AG04450 (cell line): ENCODE measurements at regions of chr7 and their contacts with region 1.

Region 1: GRCh38 chr7:66033471-66034385 is 41.9 kb upstream of the ASL start:
- DNase-seq: no peak
- H3K4me3 ChIP-seq: no peak overlapping the region
- H3K27ac ChIP-seq: no peak overlapping the region
- H3K27me3 ChIP-seq: no peaks in the 10 kb centered on the region
- CTCF ChIP-seq: no peak

Region 2: GRCh38 chr7:65892835-65893234 is 140.9 kb before region 1 on chr7:
- CTCF ChIA-PET with region 1: no interaction called
- POLR2A ChIA-PET with region 1: no interaction called
- DNase-seq: no peak
- H3K4me3 ChIP-seq: no peak overlapping the region
- H3K27ac ChIP-seq: no peak overlapping the region
- H3K27me3 ChIP-seq: no peaks in the 10 kb centered on the region
- CTCF ChIP-seq: no peak

Region 3: GRCh38 chr7:66043681-66044497 is 10.2 kb after region 1 on chr7:
- CTCF ChIA-PET with region 1: interaction called, 15 read pairs
- POLR2A ChIA-PET with region 1: no interaction called
- DNase-seq: no peak
- H3K4me3 ChIP-seq: peak overlapping the region; percentile 42
- H3K27ac ChIP-seq: no peak overlapping the region
- H3K27me3 ChIP-seq: no peaks in the 10 kb centered on the region
- CTCF ChIP-seq: no peak

Region 4: GRCh38 chr7:66092654-66093053 is 58.9 kb after region 1 on chr7:
- CTCF ChIA-PET with region 1: no interaction called
- POLR2A ChIA-PET with region 1: no interaction called
- DNase-seq: no peak
- H3K4me3 ChIP-seq: no peak overlapping the region
- H3K27ac ChIP-seq: no peak overlapping the region
- H3K27me3 ChIP-seq: no peaks in the 10 kb centered on the region
- CTCF ChIP-seq: no peak

Region 5: DNA sequence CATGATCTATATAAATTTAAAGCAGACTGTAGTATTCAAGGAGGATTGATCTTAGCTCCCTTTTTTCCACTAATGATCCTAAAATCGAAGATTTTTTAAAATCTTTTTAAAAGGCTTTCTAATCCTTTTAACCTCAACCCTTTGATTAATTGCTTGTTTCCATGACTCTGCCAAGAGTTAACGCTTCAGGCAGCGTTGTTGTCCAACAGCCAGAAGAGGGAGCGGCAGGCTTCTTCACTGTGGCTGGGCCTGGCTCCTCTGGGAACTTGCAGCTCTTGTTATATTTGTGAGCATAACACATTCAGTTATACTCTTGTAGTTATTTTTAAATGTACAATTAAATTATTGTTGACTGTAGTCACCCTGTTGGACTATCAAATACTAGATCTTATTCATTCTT is 107.2 kb after region 1 on chr7:
- CTCF ChIA-PET with region 1: interaction called, 9 read pairs
- POLR2A ChIA-PET with region 1: interaction called, 17 read pairs
- DNase-seq: no peak
- H3K4me3 ChIP-seq: no peak overlapping the region
- H3K27ac ChIP-seq: no peak overlapping the region
- H3K27me3 ChIP-seq: no peaks in the 10 kb centered on the region
- CTCF ChIP-seq: peak; percentile 77

Region 6: DNA sequence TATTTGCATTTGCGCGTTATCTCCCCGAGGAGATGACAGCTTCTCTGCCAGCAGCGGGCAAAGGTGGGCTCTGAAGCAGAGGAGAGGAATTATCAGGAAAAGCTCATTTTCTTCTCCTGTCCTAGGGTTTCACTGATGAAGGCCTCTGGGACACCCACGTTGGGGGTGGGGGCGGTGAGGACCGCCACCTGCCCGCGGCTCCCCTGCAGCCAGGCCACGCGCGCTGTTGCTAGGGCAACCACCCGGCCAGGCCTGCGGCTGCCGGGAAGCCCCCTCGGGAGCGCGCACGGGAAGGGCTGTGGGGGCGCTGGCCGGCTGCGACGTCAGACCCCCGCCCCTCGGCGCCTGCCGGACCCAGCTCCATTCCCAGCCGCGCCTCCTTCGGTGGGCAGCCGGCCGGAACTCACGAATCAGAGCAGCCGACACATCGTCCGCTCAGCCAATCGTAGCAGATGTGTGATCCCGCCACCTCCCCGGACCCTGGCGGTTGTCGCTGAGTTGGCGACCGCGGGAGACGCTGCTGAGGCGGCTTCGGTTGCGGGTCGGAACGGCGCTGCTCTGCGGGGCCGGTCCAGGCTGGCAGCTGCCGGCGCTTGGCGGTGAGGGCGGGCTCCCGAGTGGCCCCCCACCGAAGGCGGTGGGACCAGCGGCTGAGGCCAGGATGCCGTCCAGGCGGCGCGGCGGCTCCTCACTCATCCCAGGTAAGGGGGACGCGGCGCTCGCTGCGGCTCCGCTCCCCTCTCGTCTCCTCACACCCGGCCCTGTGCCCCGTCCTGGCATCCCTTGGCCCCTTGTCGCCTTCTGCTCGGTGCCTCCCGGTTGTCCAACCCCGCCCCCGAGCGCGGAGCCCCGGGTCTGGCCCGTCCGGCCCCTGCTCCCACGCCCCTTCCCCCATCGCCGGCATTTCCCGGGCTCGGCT is 171.4 kb after region 1 on chr7 and contains the start of gene TPST1:
- CTCF ChIA-PET with region 1: interaction called, 14 read pairs
- POLR2A ChIA-PET with region 1: no interaction called
- DNase-seq: peak; percentile 59
- H3K4me3 ChIP-seq: peak within 1 kb of the TSS; percentile 96
- H3K27ac ChIP-seq: no peak within 1 kb of the TSS
- H3K27me3 ChIP-seq: no peaks in the 10 kb centered on the region
- CTCF ChIP-seq: peak; percentile 34; the same call in 1 of the 2 replicates
- polyA plus RNA-seq, gene TPST1: 119 and 129 TPM in 2 replicates

Region 7: DNA sequence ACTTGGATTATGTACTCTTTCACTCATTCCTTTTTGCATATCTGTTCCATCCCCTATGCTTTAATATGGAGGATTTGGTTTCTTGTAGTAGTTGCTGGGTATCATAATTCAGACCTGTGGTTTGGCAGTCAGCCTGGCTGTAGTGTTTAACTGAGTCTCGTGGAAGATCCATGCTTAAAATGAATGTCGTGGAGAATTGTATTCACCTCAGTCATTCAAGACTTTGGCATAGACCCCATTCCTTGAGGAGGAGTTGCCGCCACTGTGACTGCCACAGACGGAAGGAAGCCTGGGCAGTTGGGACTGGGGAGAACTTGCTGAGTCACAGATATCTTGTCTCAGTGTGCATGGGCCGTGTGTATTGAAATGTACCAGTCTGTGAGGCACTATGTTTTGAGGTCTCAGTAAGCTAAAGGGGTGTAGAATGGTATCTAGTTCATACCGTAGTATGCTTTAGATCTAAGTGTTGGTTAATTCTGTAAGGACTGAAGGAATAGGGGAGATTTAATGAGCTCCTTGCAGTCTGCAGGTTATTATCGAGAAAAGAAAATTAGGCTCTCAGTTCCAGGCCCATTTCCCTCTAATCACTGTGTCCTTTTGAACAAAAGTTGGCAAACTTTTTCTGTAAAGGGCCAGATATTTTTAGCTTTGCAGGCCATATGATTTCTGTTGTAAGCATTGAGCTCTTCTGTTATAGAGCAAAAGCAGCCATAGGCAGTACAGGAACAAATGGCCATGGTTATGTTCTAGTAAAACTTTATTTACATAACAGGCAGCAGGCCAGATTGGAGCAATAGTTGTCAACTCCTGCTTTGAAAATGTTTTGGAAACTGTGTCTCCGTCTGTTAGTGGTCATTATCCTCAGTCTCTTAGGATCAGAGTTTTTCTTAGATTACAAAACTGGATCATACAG is 248.2 kb after region 1 on chr7:
- CTCF ChIA-PET with region 1: interaction called, 15 read pairs
- POLR2A ChIA-PET with region 1: no interaction called
- DNase-seq: peak; percentile 90
- H3K4me3 ChIP-seq: no peak overlapping the region; the same call in 1 of the 2 replicates
- H3K27ac ChIP-seq: peak overlapping the region; percentile 79
- H3K27me3 ChIP-seq: no peaks in the 10 kb centered on the region
- CTCF ChIP-seq: no peak

Region 8: DNA sequence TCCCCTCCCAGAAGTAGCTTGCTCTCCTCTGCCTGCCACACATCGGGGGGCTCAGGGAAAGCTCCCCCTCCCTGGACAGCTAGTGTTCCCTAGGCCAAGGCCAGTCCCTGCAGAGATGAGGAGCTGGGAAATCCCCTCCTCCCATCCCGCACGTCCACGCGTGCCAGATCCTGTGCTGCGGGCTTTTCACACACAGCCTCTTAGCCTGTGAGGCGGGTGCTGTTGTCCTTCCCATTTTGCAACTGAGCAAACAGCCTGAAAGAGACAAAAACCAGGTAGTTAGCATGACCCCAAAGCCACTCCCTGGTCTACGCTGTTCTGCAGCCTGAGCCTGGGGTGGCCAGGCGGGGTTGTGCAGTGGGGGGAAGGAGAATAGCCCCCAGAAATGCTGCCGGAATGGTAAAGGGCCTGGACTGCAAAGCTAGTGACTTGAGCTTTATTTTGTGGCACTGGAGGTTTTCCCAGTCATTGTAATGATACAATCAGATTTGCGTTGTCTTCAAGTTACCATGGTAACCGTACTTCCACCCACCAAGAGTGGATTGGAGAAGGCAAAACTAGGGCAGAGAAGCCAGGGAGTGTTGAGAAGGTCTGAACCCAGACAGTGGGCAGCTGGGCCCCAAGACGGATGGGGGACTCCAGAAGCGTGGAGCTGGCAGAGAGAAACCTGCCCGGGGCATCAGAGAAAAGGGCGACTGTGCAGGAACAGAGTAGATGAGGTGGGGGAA is 496.3 kb after region 1 on chr7:
- CTCF ChIA-PET with region 1: interaction called, 9 read pairs
- POLR2A ChIA-PET with region 1: interaction called, 10 read pairs
- DNase-seq: no peak
- H3K4me3 ChIP-seq: no peak overlapping the region
- H3K27ac ChIP-seq: no peak overlapping the region
- H3K27me3 ChIP-seq: no peaks in the 10 kb centered on the region
- CTCF ChIP-seq: no peak